Dendritic cell treated with granulocyte-macrophage colony-stimulating factor and Interleukin-4, amounts not matched to agents 40 ng/mL and 50 ng/mL, for 4 days (primary cell): ENCODE measurements at regions of chr16 and their contacts with region 1.

Region 1: GRCh38 chr16:29961479-29962343 is at the start of gene TMEM219:
- H3K4me3 Mint-ChIP-seq: peak within 1 kb of the TSS; percentile 76
- H3K27ac Mint-ChIP-seq: peak within 1 kb of the TSS; percentile 96
- H3K4me1 Mint-ChIP-seq: peaks cover 17% of the 10 kb centered on the region
- H3K27me3 Mint-ChIP-seq: no peaks in the 10 kb centered on the region

Region 2: GRCh38 chr16:29900102-29900887 is 61.4 kb before region 1 on chr16 and contains the start of gene ASPHD1:
- intact Hi-C with region 1: loop called (anchors 5 kb)
- H3K4me3 Mint-ChIP-seq: peak within 1 kb of the TSS; percentile 84
- H3K27ac Mint-ChIP-seq: peak within 1 kb of the TSS; percentile 64
- H3K4me1 Mint-ChIP-seq: peaks cover 14% of the 10 kb centered on the region
- H3K27me3 Mint-ChIP-seq: peaks cover 56% of the 10 kb centered on the region

Region 3: DNA sequence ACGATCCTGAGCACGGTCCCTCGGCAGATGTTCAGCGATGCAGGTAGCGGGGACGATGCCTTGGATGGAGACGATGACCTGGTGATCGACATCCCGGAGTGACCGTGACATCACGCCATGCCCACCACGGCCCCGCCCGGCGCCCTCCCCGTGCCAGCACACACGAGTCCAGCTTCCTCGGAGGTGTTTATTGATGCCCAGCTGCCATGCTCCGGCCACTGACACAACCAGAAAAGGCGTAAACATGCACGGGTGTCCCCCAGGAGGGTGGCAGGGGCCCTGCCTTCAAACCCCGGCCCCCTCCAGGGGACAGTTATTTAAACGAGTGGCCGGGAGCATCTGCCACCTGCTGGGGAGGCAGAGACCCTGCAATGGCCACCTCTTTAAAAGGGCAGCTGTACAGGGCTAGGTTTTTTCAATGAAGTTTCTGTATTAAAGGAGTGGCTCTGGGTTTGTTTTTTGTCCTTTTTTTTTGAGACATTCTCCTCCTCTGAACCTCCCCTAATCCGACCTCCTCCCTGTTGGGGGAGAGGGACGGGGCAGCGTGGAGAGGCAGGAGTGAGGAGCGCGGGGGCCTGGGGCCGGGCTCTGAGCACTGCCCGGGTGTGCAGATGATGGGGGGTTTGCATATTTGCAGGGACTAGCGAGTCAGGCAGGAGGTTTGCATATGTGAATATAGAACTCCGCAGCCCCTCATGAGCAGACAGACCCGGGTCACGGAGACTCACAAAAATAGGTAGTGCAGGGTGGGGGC is 43.8 kb after region 1 on chr16:
- intact Hi-C with region 1: no loop called
- H3K4me3 Mint-ChIP-seq: no peak overlapping the region
- H3K27ac Mint-ChIP-seq: no peak overlapping the region
- H3K4me1 Mint-ChIP-seq: peaks cover 9% of the 10 kb centered on the region
- H3K27me3 Mint-ChIP-seq: peaks cover 30% of the 10 kb centered on the region